PC-3 (cell line): ENCODE measurements at regions of chr2 and their contacts with region 1.

Region 1: GRCh38 chr2:150528861-150529801 is 41.7 kb upstream of the RND3 start:
- DNase-seq: peak; percentile 92
- ATAC-seq: peak; percentile 75
- H3K4me3 ChIP-seq: peak overlapping the region; percentile 34
- H3K27ac ChIP-seq: peak overlapping the region; percentile 91
- H3K4me1 ChIP-seq: peaks cover 69% of the 10 kb centered on the region
- H3K27me3 ChIP-seq: no peaks in the 10 kb centered on the region
- CTCF ChIP-seq: no peak

Region 2: DNA sequence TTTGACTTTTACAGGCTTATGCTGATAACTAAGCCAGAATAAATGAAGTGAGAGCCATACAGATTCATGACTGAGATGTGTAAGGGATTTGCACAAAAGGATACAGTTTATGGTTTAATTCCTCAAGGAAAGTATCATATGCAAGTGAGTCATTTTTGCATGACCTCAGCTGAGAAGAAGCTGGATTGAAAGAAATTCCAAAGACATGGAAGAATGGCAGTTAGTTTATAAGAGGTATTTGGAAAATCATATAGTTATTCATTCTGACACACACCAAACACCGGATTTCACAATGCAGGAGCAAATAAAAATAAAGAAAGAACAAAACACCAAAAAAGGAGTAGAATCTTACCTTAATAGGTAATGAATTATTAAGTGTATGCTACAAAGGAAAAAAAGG is 41.6 kb after region 1 on chr2:
- CTCF ChIA-PET with region 1: no interaction called
- POLR2A ChIA-PET with region 1: no interaction called
- intact Hi-C with region 1: loop called (anchors 5 kb)
- DNase-seq: peak; percentile 91
- ATAC-seq: peak; percentile 93
- H3K4me3 ChIP-seq: no peak overlapping the region
- H3K27ac ChIP-seq: peak overlapping the region; percentile 64
- H3K4me1 ChIP-seq: peaks cover 20% of the 10 kb centered on the region
- H3K27me3 ChIP-seq: no peaks in the 10 kb centered on the region
- CTCF ChIP-seq: no peak

Region 3: DNA sequence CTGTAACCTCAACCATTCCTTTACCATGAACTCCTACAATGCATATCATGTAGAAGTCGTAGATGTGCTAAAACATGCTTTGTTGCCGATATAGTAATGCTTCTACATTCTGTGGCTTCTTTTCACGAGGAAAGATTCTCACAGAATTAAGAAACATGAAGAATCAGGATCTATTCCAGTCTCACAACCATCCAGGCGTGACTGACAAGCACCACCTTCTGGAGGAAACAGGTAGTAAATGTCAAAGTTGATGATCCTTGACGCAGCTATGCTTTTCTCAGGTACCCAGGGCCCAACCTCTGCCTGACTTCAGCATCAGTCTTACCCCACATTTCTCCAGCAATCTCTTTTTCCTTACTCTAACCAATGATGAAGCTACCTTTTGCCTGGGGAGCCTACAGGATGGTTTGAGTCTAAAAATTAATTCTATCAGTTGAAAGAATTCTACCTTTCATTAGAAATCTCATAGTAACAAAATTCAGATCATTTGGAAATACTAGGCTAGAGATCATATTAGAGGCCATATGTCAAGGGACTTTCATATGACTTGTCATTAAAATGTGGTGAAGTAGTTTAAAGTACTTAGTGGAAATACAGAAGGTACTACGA is 81.6 kb after region 1 on chr2:
- CTCF ChIA-PET with region 1: no interaction called
- POLR2A ChIA-PET with region 1: no interaction called
- intact Hi-C with region 1: loop called (anchors 1 kb)
- DNase-seq: peak; percentile 85
- ATAC-seq: peak; percentile 70
- H3K4me3 ChIP-seq: no peak overlapping the region
- H3K27ac ChIP-seq: 0 out of 2 replicates have a peak overlapping the region, but pooled peaks have one; percentile 6
- H3K4me1 ChIP-seq: peaks cover 19% of the 10 kb centered on the region
- H3K27me3 ChIP-seq: no peaks in the 10 kb centered on the region
- CTCF ChIP-seq: peak; percentile 85

Region 4: DNA sequence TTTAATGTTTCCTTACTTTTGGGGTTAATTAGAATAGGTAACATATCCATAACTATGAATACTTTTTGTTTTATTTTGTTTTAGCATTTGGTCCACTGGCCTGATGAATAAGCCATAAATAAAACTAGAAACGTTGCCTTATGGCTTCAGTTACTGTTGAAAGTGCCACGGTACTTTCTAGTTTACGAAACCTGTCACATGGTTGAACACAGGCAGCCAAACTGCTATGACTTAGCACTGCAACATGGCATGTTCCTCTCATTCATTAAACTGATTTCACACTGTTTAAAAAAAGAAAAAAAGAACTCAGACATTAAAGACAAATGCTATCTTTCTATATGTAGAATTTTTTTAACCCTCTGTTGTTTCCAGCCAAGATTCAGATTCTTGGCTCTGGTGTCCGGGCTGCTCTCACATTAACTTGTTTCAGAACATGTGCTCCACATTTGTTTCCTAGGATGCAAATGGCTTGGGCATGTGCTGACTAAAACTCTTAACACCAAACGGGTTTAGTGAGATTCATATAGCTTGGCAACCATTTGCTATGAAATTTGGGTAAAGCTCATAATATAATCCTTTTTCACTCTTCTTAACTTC is 282.2 kb after region 1 on chr2:
- CTCF ChIA-PET with region 1: no interaction called
- POLR2A ChIA-PET with region 1: no interaction called
- intact Hi-C with region 1: loop called (anchors 2 kb)
- DNase-seq: peak; percentile 17
- ATAC-seq: no peak
- H3K4me3 ChIP-seq: no peak overlapping the region
- H3K27ac ChIP-seq: peak overlapping the region; percentile 88; the same call in 1 of the 2 replicates
- H3K4me1 ChIP-seq: peaks cover 20% of the 10 kb centered on the region
- H3K27me3 ChIP-seq: no peaks in the 10 kb centered on the region
- CTCF ChIP-seq: no peak

Region 5: GRCh38 chr2:150856586-150857281 is 327.6 kb after region 1 on chr2:
- CTCF ChIA-PET with region 1: no interaction called
- POLR2A ChIA-PET with region 1: no interaction called
- intact Hi-C with region 1: no loop called
- DNase-seq: peak; percentile 82
- ATAC-seq: peak; percentile 83
- H3K4me3 ChIP-seq: peak overlapping the region; percentile 11; the same call in 1 of the 2 replicates
- H3K27ac ChIP-seq: peak overlapping the region; percentile 82
- H3K4me1 ChIP-seq: peaks cover 50% of the 10 kb centered on the region
- H3K27me3 ChIP-seq: no peaks in the 10 kb centered on the region
- CTCF ChIP-seq: no peak